ENCODE measurements at regions of chr17 and their contacts with region 1.

Region 1: DNA sequence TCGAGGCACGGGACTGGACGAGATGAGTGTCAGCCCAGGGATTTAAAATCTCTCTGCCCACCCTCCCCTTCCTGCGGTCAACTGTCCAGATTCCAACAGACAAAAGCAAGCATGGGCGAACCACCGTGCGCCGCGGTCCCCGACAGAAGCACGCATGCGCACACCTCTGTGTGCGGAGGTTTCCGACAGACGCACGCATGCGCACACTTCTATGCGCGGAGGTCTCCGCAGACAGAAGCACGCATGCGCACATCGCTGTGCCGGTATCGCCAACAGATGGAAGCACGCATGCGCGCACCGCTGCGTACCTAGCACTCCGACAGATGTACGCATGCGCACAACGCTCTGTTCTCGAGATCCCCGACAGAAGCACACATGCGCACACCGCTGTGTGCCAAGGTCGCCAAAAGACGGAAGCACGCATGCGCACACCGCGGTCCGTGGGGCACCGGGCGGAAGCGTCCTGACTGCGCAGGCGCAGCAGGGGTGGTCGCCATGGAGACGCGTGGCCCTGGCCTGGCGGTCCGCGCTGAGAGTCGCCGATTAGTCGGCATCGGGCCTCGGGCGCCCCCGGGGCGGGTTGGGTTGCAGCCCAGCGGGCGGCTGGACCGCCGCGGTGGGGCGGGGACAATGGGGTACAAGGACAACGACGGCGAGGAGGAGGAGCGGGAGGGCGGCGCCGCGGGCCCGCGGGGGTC is 57.4 kb upstream of the RPH3AL start:
- DNase-seq: peak; percentile 99
- H3K4me3 ChIP-seq: peak overlapping the region; percentile 72
- H3K4me3 Mint-ChIP-seq: peak overlapping the region; percentile 74
- H3K27ac Mint-ChIP-seq: peak overlapping the region; percentile 83
- H3K4me1 ChIP-seq: peaks cover 6% of the 10 kb centered on the region; the same call in 1 of the 2 replicates
- H3K4me1 Mint-ChIP-seq: peaks cover 10% of the 10 kb centered on the region
- H3K27me3 ChIP-seq: no peaks in the 10 kb centered on the region
- H3K27me3 Mint-ChIP-seq: no peaks in the 10 kb centered on the region
- CTCF ChIP-seq: no peak

Region 2: DNA sequence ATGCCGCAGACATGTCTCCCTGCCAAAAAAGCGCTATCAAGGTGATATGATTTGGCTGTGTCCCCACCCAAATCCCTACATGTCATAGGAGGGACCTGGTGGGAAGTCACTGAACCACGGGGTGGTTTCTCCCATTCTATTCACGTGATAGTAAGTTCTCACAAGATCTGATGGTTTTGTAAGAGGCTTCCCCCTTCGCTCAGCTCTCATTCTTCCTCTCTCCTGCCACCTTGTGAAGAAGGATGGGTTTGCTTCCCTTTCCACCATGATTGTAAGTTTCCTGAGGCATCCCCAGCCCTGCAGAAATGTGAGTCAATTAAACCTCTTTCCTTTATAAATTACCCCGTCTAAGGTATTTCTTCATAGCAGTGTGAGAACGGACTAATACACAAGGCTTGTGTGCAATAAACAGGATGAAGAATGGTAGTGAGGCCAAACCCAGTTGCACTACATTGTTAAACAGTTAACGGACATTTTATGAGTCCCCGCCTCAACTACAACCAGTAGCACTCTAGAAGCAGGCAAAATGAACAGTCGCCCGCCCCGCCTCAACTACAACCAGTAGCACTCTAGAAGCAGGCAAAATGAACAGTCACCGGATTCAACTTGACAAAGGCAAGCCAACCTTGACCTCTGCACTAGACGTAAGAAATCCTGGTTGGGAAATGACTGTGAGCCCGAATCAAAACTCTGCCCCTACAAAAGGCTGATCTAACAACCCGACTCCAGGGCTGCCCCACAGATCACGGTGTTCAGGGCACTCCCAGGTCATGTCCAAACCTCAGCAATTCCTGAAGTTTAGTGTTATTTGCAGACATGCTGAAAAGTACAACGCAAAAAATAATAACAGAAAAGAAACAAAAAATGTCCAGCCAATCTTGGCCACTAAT is 278.3 kb after region 1 on chr17:
- CTCF ChIA-PET with region 1: interaction called, 3 read pairs
- POLR2A ChIA-PET with region 1: no interaction called
- intact Hi-C with region 1: loop called (anchors 5 kb)
- DNase-seq: no peak
- H3K4me3 ChIP-seq: no peak overlapping the region
- H3K4me3 Mint-ChIP-seq: no peak overlapping the region
- H3K27ac Mint-ChIP-seq: no peak overlapping the region
- H3K4me1 ChIP-seq: no peaks in the 10 kb centered on the region
- H3K4me1 Mint-ChIP-seq: no peaks in the 10 kb centered on the region
- H3K27me3 ChIP-seq: no peaks in the 10 kb centered on the region
- H3K27me3 Mint-ChIP-seq: no peaks in the 10 kb centered on the region
- CTCF ChIP-seq: peak in 1 of 2 experiments; percentile 8

Region 3: GRCh38 chr17:700504-701094 is 290.6 kb after region 1 on chr17:
- CTCF ChIA-PET with region 1: interaction called, 10 read pairs
- POLR2A ChIA-PET with region 1: no interaction called
- intact Hi-C with region 1: loop called (anchors 1 kb)
- DNase-seq: peak in 1 of 2 experiments; percentile 2
- H3K4me3 ChIP-seq: no peak overlapping the region
- H3K4me3 Mint-ChIP-seq: no peak overlapping the region
- H3K27ac Mint-ChIP-seq: no peak overlapping the region
- H3K4me1 ChIP-seq: no peaks in the 10 kb centered on the region
- H3K4me1 Mint-ChIP-seq: no peaks in the 10 kb centered on the region
- H3K27me3 ChIP-seq: no peaks in the 10 kb centered on the region
- H3K27me3 Mint-ChIP-seq: no peaks in the 10 kb centered on the region
- CTCF ChIP-seq: peak; percentile 11 to 29

Region 4: GRCh38 chr17:996554-997344 is 586.8 kb after region 1 on chr17 and contains the start of gene TIMM22:
- CTCF ChIA-PET with region 1: interaction called, 21 read pairs
- POLR2A ChIA-PET with region 1: no interaction called
- intact Hi-C with region 1: loop called (anchors 2 kb)
- DNase-seq: peak; percentile 97
- H3K4me3 ChIP-seq: peak within 1 kb of the TSS; percentile 87
- H3K4me3 Mint-ChIP-seq: peak within 1 kb of the TSS; percentile 97
- H3K27ac Mint-ChIP-seq: peak within 1 kb of the TSS; percentile 99
- H3K4me1 ChIP-seq: peaks cover 10% of the 10 kb centered on the region
- H3K4me1 Mint-ChIP-seq: peaks cover 11% of the 10 kb centered on the region
- H3K27me3 ChIP-seq: no peaks in the 10 kb centered on the region
- H3K27me3 Mint-ChIP-seq: no peaks in the 10 kb centered on the region
- CTCF ChIP-seq: peak; percentile 93 to 95
- total RNA-seq, gene TIMM22: 20.1 and 20.6 TPM in 2 replicates